CD4-positive, alpha-beta T cell (primary cell): ENCODE measurements at regions of chr17 and their contacts with region 1.

Region 1: DNA sequence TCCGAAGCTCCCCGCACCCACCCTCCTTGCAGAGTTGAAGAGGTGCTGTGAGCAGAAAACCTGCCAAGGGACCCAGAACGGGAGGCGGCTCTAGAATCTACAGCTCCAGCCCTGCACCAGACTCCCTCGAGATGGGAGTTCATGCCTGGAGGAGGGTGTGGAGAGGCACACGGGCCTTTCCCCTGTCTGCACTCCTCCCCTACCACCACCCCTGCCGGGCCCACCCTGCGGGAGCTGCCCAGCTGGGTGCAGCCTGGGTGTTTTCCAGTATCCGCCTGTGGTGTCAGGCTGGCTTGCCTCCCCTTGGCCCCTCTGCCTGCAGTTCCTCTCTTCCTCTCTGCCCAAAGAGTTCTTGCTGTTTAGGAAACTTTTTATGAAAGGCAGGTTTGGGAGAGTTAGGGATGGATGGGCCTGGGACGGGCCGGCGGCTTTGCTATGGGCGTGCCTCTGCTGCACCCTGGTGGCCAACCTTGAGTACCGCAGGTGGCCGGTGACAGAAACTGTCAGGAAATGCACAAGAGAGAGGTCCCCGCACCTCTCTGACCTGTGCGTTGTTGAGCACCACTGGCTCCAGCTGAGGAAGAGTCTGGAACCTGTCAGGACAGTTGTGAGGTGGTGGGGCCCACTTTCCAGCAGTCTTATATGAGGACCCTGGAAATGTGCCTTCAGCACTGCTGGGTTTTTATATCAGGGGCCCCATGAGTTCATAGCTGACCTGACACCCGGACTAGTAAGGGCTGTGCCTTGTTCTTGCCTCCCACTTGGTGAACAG is 354.1 kb downstream of the SEC14L1 start:
- DNase-seq: peak; percentile 55 to 89 (median 71)
- ATAC-seq: peak; percentile 79
- H3K4me3 ChIP-seq: no peak overlapping the region
- H3K4me3 Mint-ChIP-seq: no peak overlapping the region
- H3K27ac ChIP-seq: peak overlapping the region; percentile 3 to 40
- H3K27ac Mint-ChIP-seq: peak overlapping the region; percentile 71
- H3K4me1 ChIP-seq: peaks cover 57% of the 10 kb centered on the region
- H3K4me1 Mint-ChIP-seq: peaks cover 7% of the 10 kb centered on the region
- H3K27me3 ChIP-seq: no peaks in the 10 kb centered on the region
- H3K27me3 Mint-ChIP-seq: no peaks in the 10 kb centered on the region
- CTCF ChIP-seq: peak; percentile 99

Region 2: GRCh38 chr17:77280980-77281903 is 213.6 kb before region 1 on chr17:
- CTCF ChIA-PET with region 1: interaction called, 5 read pairs
- POLR2A ChIA-PET with region 1: no interaction called
- intact Hi-C with region 1: loop called in 1 of 2 experiments (anchors 1 kb)
- DNase-seq: peak; percentile 32 to 89 (median 60)
- ATAC-seq: peak; percentile 92
- H3K4me3 ChIP-seq: peak overlapping the region; percentile 44
- H3K4me3 Mint-ChIP-seq: peak overlapping the region; percentile 88
- H3K27ac ChIP-seq: no peak overlapping the region
- H3K27ac Mint-ChIP-seq: peak overlapping the region; percentile 88
- H3K4me1 ChIP-seq: peaks cover 26% of the 10 kb centered on the region
- H3K4me1 Mint-ChIP-seq: peaks cover 14% of the 10 kb centered on the region
- H3K27me3 ChIP-seq: peaks cover 12 to 21% of the 10 kb centered on the region in 2 experiments
- H3K27me3 Mint-ChIP-seq: peaks cover 15% of the 10 kb centered on the region
- CTCF ChIP-seq: no peak

Region 3: DNA sequence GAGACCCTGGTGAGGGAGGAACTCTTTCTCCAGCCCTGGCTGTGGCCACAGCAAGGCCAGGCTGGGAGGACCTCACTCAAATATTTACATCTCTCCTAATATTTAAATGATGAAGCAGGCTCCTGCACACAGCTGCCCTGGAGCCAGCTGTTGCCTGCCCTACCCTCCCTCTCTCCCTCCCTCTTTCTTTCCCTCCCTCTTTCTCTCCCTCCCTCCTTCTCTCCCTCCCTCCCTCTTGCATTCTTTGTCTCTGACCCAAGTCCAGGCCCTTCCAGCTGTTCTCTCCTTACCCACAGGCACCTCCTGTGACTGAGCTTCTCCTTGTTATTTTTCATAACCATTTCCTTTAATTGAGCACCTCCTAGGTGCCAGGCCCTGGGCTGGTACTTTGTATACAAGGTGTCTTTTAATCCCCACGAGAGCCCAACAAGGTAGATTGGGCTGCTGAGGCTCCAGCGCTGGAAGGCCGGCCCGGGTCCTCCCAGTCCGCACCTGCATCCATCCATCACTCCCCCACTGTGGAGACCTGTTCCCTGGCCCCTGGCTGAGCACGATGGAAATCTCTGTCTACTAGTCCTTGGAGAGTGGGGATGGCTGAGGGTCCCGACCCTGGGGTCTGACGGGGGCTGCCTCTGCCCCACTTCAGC is 111.8 kb before region 1 on chr17:
- CTCF ChIA-PET with region 1: no interaction called
- POLR2A ChIA-PET with region 1: interaction called, 6 read pairs
- intact Hi-C with region 1: loop called in 1 of 2 experiments (anchors 2 kb)
- DNase-seq: no peak
- ATAC-seq: peak; percentile 9
- H3K4me3 ChIP-seq: peak overlapping the region; percentile 41
- H3K4me3 Mint-ChIP-seq: peak overlapping the region; percentile 50
- H3K27ac ChIP-seq: peak overlapping the region in 1 of 2 donors; percentile 32
- H3K27ac Mint-ChIP-seq: peak overlapping the region; percentile 93
- H3K4me1 ChIP-seq: peaks cover 100% of the 10 kb centered on the region
- H3K4me1 Mint-ChIP-seq: peaks cover 93% of the 10 kb centered on the region
- H3K27me3 ChIP-seq: no peaks in the 10 kb centered on the region
- H3K27me3 Mint-ChIP-seq: no peaks in the 10 kb centered on the region
- CTCF ChIP-seq: no peak

Region 4: GRCh38 chr17:77437017-77437416 is 57.8 kb before region 1 on chr17:
- CTCF ChIA-PET with region 1: interaction called, 19 read pairs
- POLR2A ChIA-PET with region 1: interaction called, 16 read pairs
- intact Hi-C with region 1: no loop called
- DNase-seq: peak in 5 of 14 experiments; percentile 34 to 68 (median 67)
- ATAC-seq: no peak
- H3K4me3 ChIP-seq: peak overlapping the region; percentile 55
- H3K4me3 Mint-ChIP-seq: peak overlapping the region; percentile 96
- H3K27ac ChIP-seq: peak overlapping the region; percentile 79 to 98
- H3K27ac Mint-ChIP-seq: peak overlapping the region; percentile 93
- H3K4me1 ChIP-seq: peaks cover 100% of the 10 kb centered on the region
- H3K4me1 Mint-ChIP-seq: peaks cover 97% of the 10 kb centered on the region
- H3K27me3 ChIP-seq: no peaks in the 10 kb centered on the region
- H3K27me3 Mint-ChIP-seq: no peaks in the 10 kb centered on the region
- CTCF ChIP-seq: no peak

Region 5: GRCh38 chr17:77516902-77517301 is 22.1 kb after region 1 on chr17:
- CTCF ChIA-PET with region 1: no interaction called
- POLR2A ChIA-PET with region 1: no interaction called
- intact Hi-C with region 1: no loop called
- DNase-seq: peak in 1 of 14 experiments; percentile 27
- ATAC-seq: peak; percentile 51
- H3K4me3 ChIP-seq: no peak overlapping the region
- H3K4me3 Mint-ChIP-seq: no peak overlapping the region
- H3K27ac ChIP-seq: no peak overlapping the region
- H3K27ac Mint-ChIP-seq: no peak overlapping the region
- H3K4me1 ChIP-seq: no peaks in the 10 kb centered on the region
- H3K4me1 Mint-ChIP-seq: no peaks in the 10 kb centered on the region
- H3K27me3 ChIP-seq: no peaks in the 10 kb centered on the region
- H3K27me3 Mint-ChIP-seq: no peaks in the 10 kb centered on the region
- CTCF ChIP-seq: no peak

Region 6: GRCh38 chr17:77590951-77591735 is 96.3 kb after region 1 on chr17:
- CTCF ChIA-PET with region 1: no interaction called
- POLR2A ChIA-PET with region 1: no interaction called
- intact Hi-C with region 1: no loop called
- DNase-seq: no peak
- ATAC-seq: no peak
- H3K4me3 ChIP-seq: no peak overlapping the region
- H3K4me3 Mint-ChIP-seq: no peak overlapping the region
- H3K27ac ChIP-seq: no peak overlapping the region
- H3K27ac Mint-ChIP-seq: no peak overlapping the region
- H3K4me1 ChIP-seq: no peaks in the 10 kb centered on the region
- H3K4me1 Mint-ChIP-seq: peaks cover 8% of the 10 kb centered on the region
- H3K27me3 ChIP-seq: no peaks in the 10 kb centered on the region
- H3K27me3 Mint-ChIP-seq: peaks cover 12% of the 10 kb centered on the region
- CTCF ChIP-seq: no peak

Region 7: GRCh38 chr17:77690271-77691161 is 195.7 kb after region 1 on chr17:
- CTCF ChIA-PET with region 1: no interaction called
- POLR2A ChIA-PET with region 1: no interaction called
- intact Hi-C with region 1: no loop called
- DNase-seq: peak in 6 of 14 experiments; percentile 12 to 47 (median 37)
- ATAC-seq: peak; percentile 39
- H3K4me3 ChIP-seq: peak overlapping the region; percentile 21
- H3K4me3 Mint-ChIP-seq: peak overlapping the region; percentile 13
- H3K27ac ChIP-seq: no peak overlapping the region
- H3K27ac Mint-ChIP-seq: no peak overlapping the region
- H3K4me1 ChIP-seq: peaks cover 39% of the 10 kb centered on the region
- H3K4me1 Mint-ChIP-seq: peaks cover 39% of the 10 kb centered on the region
- H3K27me3 ChIP-seq: peaks cover 0 to 5% of the 10 kb centered on the region in 2 experiments
- H3K27me3 Mint-ChIP-seq: peaks cover 10% of the 10 kb centered on the region
- CTCF ChIP-seq: no peak